T-cell (primary cell): ENCODE measurements at regions of chr14 and their contacts with region 1.

Region 1: DNA sequence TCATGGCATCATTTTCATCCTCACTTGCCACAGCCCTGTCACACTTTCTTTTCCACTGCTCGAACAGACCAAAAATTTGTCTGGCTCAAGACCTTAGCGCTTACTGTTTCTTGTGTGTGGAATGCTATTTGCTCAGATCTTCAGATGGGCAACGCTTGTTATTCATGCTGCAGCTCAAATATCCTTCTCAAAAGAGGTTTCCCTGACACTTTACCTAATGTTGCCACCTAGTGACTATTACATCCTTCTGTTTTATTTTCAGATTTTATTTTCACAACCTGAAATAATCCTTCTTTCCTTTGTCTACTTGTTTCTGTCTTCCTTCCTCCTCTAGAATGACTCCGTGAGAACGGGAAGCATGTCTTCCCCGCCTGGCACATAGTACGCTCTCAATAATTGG is 5.6 kb downstream of the FBXO33 start:
- DNase-seq: peak in 1 of 35 experiments; percentile 40
- ATAC-seq: peak in 1 of 4 experiments; percentile 21
- H3K4me3 ChIP-seq: no peak overlapping the region
- H3K4me3 Mint-ChIP-seq: peak overlapping the region; percentile 0 to 24 (median 14)
- H3K27ac ChIP-seq: no peak overlapping the region
- H3K27ac Mint-ChIP-seq: peak overlapping the region; percentile 0 to 36
- H3K4me1 ChIP-seq: peaks cover 29 to 30% of the 10 kb centered on the region in 2 experiments
- H3K4me1 Mint-ChIP-seq: peaks cover 81 to 88% (median 87%) of the 10 kb centered on the region in 3 donors
- H3K27me3 ChIP-seq: no peaks in the 10 kb centered on the region
- H3K27me3 Mint-ChIP-seq: no peaks in the 10 kb centered on the region

Region 2: DNA sequence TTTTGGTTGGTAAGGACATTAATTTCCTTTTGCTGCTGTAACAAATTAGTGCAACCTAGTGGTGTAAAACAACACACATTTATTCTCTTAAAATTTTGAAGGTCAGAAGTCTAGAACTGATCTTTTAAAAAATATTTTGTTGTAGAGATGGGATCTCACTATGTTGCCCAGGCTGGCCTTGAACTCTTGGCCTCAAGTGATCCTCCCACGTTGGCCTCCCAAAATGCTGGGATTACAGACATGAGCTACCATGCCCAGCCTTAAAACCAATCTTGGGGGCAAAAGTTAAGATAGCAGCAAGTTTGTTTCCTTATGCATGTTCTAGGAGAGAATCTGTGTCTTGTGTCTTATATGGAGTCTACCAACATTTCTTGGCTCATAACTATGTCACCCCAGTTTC is 137.1 kb before region 1 on chr14:
- CTCF ChIA-PET with region 1: no interaction called
- POLR2A ChIA-PET with region 1: interaction called in 1 of 2 experiments, 11 read pairs
- DNase-seq: no peak
- ATAC-seq: no peak
- H3K4me3 ChIP-seq: no peak overlapping the region
- H3K4me3 Mint-ChIP-seq: no peak overlapping the region
- H3K27ac ChIP-seq: no peak overlapping the region
- H3K27ac Mint-ChIP-seq: no peak overlapping the region
- H3K4me1 ChIP-seq: no peaks in the 10 kb centered on the region
- H3K4me1 Mint-ChIP-seq: peaks cover 0 to 6% (median 5%) of the 10 kb centered on the region in 3 donors
- H3K27me3 ChIP-seq: no peaks in the 10 kb centered on the region
- H3K27me3 Mint-ChIP-seq: no peaks in the 10 kb centered on the region

Region 3: GRCh38 chr14:39339003-39339402 is 87.6 kb before region 1 on chr14:
- CTCF ChIA-PET with region 1: no interaction called
- POLR2A ChIA-PET with region 1: no interaction called
- DNase-seq: no peak
- ATAC-seq: no peak
- H3K4me3 ChIP-seq: no peak overlapping the region
- H3K4me3 Mint-ChIP-seq: no peak overlapping the region
- H3K27ac ChIP-seq: no peak overlapping the region
- H3K27ac Mint-ChIP-seq: no peak overlapping the region
- H3K4me1 ChIP-seq: no peaks in the 10 kb centered on the region
- H3K4me1 Mint-ChIP-seq: peaks cover 14 to 19% (median 18%) of the 10 kb centered on the region in 3 donors
- H3K27me3 ChIP-seq: no peaks in the 10 kb centered on the region
- H3K27me3 Mint-ChIP-seq: no peaks in the 10 kb centered on the region